Activated CD8-positive, alpha-beta T cell treated with anti-CD3 and anti-CD28 coated beads for 36 hours (primary cell): ENCODE measurements at regions of chr14 and their contacts with region 1.

Region 1: GRCh38 chr14:74712499-74713394 is at the starts of genes AREL1 and FCF1:
- DNase-seq: peak; percentile 89
- ATAC-seq: peak; percentile 94
- H3K4me3 Mint-ChIP-seq: peak within 1 kb of the TSS; percentile 97
- H3K27ac Mint-ChIP-seq: peak within 1 kb of the TSS; percentile 94
- H3K4me1 Mint-ChIP-seq: peaks cover 39% of the 10 kb centered on the region
- H3K27me3 Mint-ChIP-seq: no peaks in the 10 kb centered on the region
- CTCF ChIP-seq: no peak
- total RNA-seq, gene AREL1: 26.4 to 28.2 TPM
- total RNA-seq, gene FCF1: 75.2 to 78.9 TPM

Region 2: DNA sequence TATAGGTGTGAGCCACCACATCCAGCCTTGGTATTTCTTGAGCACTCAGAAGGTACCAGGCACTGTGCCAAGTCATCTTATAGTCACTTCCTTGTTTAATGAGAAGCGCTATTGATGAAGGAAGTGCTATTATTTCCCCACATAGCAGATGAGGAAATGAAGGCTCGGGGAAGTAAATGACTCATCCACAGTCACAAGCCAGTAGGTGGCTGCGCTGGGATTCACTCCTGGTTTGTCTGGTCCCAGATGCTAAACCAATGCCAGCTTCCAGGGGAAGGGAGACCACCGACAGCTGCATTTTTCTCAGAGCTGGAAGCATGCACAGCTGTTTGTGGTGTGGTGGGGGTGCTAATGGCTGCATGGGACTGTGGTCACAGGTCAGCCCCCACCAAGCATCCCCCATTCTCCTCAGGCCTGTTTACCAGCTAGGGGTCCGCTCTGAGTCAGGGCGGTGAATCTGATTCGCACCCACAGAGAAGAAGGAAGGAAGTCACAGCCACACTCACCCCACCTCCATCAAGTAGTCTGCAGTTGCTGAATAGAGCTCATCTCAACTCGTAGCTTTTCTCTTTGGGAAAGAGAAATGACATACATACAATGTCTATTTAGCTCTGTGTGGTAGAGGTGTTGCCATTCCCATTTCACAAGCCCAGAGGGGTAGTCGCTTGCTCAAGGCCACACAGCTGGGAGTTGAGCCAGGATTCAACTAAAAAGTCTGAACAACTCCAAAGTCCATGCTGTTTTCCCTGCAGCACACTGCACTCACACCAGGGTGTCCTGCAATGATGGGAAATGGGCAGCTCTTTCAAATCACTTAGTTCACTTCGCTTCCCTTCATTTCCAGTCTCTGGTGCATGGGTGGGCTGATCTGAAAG is 94.4 kb before region 1 on chr14:
- CTCF ChIA-PET with region 1: no interaction called
- POLR2A ChIA-PET with region 1: interaction called, 3 read pairs
- intact Hi-C with region 1: loop called (anchors 5 kb)
- DNase-seq: peak; percentile 91
- ATAC-seq: peak; percentile 83
- H3K4me3 Mint-ChIP-seq: peak overlapping the region; percentile 39
- H3K27ac Mint-ChIP-seq: peak overlapping the region; percentile 70
- H3K4me1 Mint-ChIP-seq: peaks cover 64% of the 10 kb centered on the region
- H3K27me3 Mint-ChIP-seq: peaks cover 7% of the 10 kb centered on the region
- CTCF ChIP-seq: no peak

Region 3: DNA sequence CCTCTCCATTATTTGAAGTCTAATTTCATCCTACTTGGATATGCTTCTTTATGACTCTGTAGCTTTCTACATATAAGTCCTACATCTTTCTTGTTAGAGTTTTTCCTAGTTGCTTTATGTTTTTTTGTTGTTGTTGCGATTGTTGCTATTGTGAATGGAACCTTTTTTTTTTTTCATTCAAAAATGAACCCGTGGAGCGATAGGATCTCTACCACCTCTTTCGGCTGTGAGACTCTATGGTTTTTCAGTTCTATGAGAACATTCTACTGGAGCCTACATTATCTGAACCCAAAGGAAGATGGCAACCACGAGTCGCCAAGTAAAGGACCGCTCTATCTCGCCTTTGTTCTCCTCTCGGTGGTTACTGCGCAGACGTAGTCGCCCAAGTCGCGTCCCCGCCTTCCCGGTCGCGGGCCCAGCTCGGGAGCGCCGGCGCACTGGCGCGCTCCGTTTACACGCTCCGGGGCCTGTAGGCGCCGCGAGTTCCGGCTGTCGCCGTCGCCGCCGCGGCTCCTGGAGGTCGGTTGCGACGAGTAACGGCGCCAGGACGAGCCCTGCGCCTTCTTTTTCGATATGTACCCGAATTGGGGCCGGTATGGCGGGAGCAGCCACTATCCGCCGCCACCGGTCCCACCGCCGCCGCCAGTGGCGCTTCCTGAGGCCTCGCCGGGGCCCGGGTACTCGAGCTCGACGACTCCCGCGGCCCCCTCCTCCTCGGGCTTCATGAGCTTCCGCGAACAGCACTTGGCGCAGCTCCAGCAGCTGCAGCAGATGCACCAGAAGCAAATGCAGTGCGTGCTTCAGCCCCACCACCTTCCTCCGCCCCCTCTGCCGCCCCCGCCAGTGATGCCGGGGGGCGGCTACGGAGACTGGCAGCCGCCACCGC is 50.4 kb after region 1 on chr14 and contains the start of gene YLPM1:
- CTCF ChIA-PET with region 1: interaction called, 9 read pairs
- POLR2A ChIA-PET with region 1: interaction called, 8 read pairs
- intact Hi-C with region 1: loop called (anchors 5 kb)
- DNase-seq: peak; percentile 93
- ATAC-seq: peak; percentile 96
- H3K4me3 Mint-ChIP-seq: peak within 1 kb of the TSS; percentile 97
- H3K27ac Mint-ChIP-seq: peak within 1 kb of the TSS; percentile 92
- H3K4me1 Mint-ChIP-seq: peaks cover 43% of the 10 kb centered on the region
- H3K27me3 Mint-ChIP-seq: no peaks in the 10 kb centered on the region
- CTCF ChIP-seq: peak; percentile 46
- total RNA-seq, gene YLPM1: 43.6 to 49.0 TPM